Right cardiac atrium (tissue), 5 donors: ENCODE measurements at regions of chrX and their contacts with region 1.

Region 1: GRCh38 chrX:133544115-133544514 is 128.8 kb upstream of the GPC4 start:
- DNase-seq: no peak
- ATAC-seq: no peak
- H3K4me3 ChIP-seq: no peak overlapping the region
- H3K27ac ChIP-seq: no peak overlapping the region
- H3K4me1 ChIP-seq: no peaks in the 10 kb centered on the region
- H3K27me3 ChIP-seq: no peaks in the 10 kb centered on the region

Region 2: DNA sequence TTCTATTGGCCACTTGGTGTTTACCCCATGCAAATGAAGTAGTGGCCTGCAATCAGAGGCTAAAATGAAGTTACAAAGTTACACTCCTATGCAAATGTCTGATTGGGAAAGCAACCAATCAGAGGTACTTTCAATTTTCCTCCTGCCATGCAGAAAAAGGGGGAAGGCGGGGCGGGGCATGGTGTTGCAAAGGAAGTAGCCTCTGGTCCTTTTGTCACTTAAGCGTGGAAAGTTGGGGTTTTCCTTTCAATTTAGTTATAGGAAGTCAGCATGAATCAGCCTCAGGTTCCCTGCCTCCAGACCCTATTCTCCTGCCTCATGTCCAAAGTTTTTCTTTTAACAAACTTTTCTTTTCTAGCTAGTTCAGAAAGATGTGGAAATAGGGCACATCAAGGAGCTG is 198.1 kb before region 1 on chrX:
- intact Hi-C with region 1: loop called in 1 of 4 experiments (anchors 10 kb)
- DNase-seq: no peak
- ATAC-seq: no peak
- H3K4me3 ChIP-seq: no peak overlapping the region
- H3K27ac ChIP-seq: no peak overlapping the region
- H3K4me1 ChIP-seq: no peaks in the 10 kb centered on the region
- H3K27me3 ChIP-seq: no peaks in the 10 kb centered on the region

Region 3: GRCh38 chrX:133482056-133482952 is 61.8 kb before region 1 on chrX:
- intact Hi-C with region 1: no loop called
- DNase-seq: peak in 1 of 3 donors; percentile 18
- ATAC-seq: no peak
- H3K4me3 ChIP-seq: no peak overlapping the region
- H3K27ac ChIP-seq: no peak overlapping the region
- H3K4me1 ChIP-seq: no peaks in the 10 kb centered on the region
- H3K27me3 ChIP-seq: no peaks in the 10 kb centered on the region

Region 4: DNA sequence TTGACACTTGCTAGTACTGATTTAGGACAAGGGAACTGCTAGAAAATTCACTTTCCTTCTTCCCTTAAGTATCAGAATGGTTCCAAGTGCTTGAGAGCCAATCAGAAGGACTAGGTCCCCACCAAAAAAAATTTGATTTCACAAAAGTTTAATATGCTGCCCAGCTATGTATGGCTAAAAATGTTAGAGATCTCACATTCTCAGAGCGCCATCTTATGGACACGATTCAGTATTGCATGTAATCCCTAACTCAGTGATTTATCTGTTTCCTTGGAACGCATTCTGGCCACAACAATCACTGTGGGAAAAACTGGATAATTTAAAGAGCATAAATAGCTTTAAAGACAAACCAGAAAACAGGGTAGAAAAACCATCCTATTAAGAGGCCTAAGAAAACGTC is 126.3 kb after region 1 on chrX:
- intact Hi-C with region 1: no loop called
- DNase-seq: no peak
- ATAC-seq: peak in 1 of 2 donors; percentile 25
- H3K4me3 ChIP-seq: no peak overlapping the region
- H3K27ac ChIP-seq: no peak overlapping the region
- H3K4me1 ChIP-seq: no peaks in the 10 kb centered on the region
- H3K27me3 ChIP-seq: no peaks in the 10 kb centered on the region

Region 5: DNA sequence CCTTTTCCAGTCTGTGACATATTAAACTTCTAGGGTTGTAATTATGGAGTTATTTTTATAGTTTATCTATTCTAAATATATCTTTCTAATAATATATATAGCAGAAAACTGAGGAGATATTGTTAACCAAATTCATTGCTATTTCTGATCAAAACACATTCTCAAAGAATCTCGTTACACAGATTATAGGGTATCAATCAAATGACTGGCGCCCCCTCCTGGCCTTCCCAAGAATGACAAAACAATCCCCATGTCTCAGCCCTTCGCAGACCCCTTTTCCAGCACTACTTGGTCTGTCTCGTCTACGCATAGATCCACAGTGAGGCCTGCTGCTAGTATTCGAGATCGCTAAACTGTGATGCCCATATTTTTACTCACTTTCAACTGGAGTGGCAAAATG is 232.0 kb after region 1 on chrX:
- intact Hi-C with region 1: no loop called
- DNase-seq: peak in 1 of 3 donors; percentile 22
- ATAC-seq: no peak
- H3K4me3 ChIP-seq: no peak overlapping the region
- H3K27ac ChIP-seq: no peak overlapping the region
- H3K4me1 ChIP-seq: no peaks in the 10 kb centered on the region
- H3K27me3 ChIP-seq: no peaks in the 10 kb centered on the region